ENCODE measurements at regions of chr19 and their contacts with region 1.

Region 1: DNA sequence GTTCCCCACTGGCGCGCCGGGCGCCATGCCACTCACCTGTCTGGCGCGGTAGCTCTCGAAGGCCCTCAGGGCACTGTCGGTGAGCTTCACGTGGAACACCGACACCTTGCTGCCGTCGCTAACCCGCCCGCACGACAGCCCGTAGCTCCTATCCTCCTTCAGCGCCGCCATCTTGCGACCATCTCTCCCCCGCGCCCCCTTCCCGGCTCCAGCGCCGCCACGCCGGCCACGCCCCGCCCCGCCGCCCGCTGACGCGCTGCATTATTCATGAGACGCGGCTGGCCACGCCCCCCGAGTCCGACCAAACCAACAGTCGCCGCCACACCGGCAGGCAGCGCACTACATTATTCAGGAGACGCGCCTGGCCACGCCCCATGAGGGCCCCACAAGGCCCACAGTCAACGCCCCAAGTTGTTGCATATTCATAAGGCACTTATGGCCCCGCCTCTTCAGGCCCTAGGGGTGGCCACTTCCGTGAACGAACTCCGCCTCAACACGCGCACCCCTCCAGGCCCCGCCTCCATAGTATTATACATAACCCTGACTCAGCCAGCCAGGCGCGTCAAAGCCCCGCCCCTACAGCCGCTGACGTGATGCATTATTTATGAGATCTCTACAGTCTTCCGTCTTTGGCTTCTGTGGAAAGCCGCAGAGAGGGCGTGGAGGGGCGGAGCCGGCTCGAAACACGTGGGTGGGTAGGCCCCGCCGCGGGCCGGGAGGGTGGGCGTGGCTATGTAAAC is at the start of gene ELL:
- DNase-seq: peak; percentile 100
- ATAC-seq: peak; percentile 91
- H3K4me3 Mint-ChIP-seq: peak within 1 kb of the TSS; percentile 79
- H3K27ac Mint-ChIP-seq: peak within 1 kb of the TSS; percentile 95
- H3K4me1 Mint-ChIP-seq: peaks cover 11% of the 10 kb centered on the region
- H3K27me3 Mint-ChIP-seq: no peaks in the 10 kb centered on the region
- total RNA-seq, gene ELL: 20.8 to 22.3 TPM

Region 2: DNA sequence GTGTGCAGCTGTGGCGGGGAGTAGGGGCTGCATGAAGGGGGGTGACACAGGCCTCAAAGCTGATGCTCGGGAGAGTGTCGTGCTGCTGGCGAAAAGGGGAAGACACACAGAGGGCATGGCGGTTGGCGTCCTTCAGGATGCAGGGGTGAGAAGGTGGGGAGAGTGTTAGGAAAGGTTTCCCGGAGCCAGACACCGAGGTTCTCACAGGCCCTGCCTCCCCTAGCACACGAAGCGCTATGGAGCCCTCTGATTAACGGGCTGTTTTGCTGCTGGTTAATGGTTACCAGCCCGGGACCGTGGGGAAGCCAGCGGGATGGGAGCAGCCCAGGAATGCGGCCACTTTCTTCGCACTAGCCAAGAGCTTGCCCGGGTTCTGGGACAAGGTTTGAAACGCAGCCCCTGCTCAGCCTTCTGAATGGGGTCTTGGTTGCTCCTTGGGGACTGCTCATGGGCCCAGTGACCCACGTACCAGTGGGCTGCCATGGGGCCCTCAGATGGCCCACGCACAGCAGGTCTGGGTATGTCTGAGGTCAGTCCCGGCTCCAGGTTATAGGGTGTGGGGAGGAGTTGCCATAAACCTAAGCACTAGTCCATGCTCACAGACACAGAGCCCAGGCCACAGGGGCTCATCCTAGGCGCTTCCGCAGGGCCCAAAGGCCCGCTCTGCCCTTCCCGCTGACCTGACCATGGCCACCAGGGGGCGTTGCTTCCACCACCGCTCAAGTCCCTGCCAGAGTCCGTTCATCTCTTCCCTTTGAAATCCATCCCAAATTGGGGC is 52.8 kb before region 1 on chr19:
- CTCF ChIA-PET with region 1: interaction called, 38 read pairs
- POLR2A ChIA-PET with region 1: interaction called, 3 read pairs
- DNase-seq: peak; percentile 69
- ATAC-seq: peak; percentile 49
- H3K4me3 Mint-ChIP-seq: no peak overlapping the region
- H3K27ac Mint-ChIP-seq: no peak overlapping the region
- H3K4me1 Mint-ChIP-seq: peaks cover 32% of the 10 kb centered on the region
- H3K27me3 Mint-ChIP-seq: no peaks in the 10 kb centered on the region

Region 3: GRCh38 chr19:18488838-18489626 is 33.0 kb before region 1 on chr19:
- CTCF ChIA-PET with region 1: interaction called, 46 read pairs
- POLR2A ChIA-PET with region 1: interaction called, 3 read pairs
- DNase-seq: no peak
- ATAC-seq: no peak
- H3K4me3 Mint-ChIP-seq: no peak overlapping the region
- H3K27ac Mint-ChIP-seq: no peak overlapping the region
- H3K4me1 Mint-ChIP-seq: peaks cover 55% of the 10 kb centered on the region
- H3K27me3 Mint-ChIP-seq: no peaks in the 10 kb centered on the region

Region 4: DNA sequence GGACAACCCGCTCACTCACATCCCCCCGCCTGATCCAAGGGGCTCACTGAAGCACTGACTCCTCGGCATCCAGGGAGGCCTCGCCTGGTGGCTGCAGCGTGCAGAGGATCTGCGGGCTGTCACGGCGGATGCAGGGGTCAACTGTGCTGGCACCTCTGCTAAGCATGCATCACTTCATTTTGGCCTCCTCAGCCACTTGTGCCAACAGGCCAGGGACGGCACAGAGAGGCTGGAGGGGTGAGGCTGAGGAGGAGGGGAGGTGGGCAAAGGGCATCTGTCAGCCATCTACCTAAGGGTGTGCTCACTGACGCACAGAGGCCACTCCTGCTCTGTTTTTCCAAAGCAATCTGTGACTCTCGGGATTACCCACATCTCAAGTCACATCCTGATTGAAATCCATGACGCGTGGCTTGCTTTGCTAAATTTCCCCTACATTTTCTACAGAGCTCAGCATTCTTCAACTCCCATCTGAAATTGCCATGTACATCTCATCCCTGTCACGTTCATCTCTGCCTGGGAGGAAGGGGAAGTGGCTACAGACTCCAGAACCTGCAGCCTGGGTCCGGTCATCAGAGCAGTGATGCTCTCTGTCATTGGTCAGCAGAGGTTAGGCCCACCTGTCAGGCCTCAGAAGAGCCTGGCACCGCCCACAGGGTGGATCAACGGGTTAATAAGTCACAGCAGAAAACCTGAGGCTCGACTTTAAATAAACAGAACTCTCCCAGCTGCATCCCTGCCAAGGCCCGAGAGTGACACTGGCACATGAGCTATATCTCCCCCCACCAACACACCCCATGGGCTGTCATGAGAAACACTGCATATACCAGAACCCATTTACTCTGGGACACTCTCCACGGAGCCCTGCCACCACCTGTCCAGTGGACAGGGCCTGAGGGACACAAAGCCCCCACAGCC is 17.8 kb before region 1 on chr19:
- CTCF ChIA-PET with region 1: interaction called, 78 read pairs
- POLR2A ChIA-PET with region 1: interaction called, 7 read pairs
- DNase-seq: no peak
- ATAC-seq: no peak
- H3K4me3 Mint-ChIP-seq: no peak overlapping the region
- H3K27ac Mint-ChIP-seq: peak overlapping the region; percentile 90
- H3K4me1 Mint-ChIP-seq: peaks cover 94% of the 10 kb centered on the region
- H3K27me3 Mint-ChIP-seq: no peaks in the 10 kb centered on the region

Region 5: DNA sequence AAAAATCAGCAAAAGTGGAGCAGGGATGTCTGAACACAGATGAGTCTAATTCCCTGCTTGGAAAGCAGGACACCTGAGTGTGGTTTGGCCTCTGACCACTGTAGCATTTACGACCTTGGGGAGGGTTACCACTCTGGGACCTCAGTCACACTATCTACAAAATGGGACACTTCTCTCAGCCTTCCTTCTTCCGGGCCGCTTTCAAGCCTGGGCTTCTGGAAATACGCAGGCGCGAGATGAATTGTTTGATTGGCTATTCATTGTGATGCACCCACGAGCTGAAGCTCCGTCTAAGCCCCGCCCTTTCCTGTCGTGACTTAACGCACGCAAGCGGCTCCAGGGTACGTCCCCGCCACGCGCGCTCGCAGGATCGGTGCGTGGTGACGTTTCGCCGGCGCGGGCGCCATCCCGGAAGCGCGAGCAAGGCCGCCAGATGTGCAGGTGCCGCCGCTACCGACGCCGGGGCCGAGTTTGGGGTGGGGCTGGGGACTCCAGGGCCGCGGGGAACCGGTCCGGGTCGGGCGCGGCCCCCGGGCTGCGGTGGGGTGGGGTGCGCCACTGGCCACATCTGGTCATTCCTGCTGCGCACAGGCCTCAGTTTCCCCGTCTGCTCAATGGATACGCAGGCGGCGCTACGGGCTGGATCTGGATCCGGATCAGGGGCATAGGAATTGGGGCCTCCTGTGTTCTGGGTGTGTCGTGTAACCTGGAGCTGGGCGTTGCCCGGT is 35.6 kb after region 1 on chr19 and contains the start of gene KXD1:
- CTCF ChIA-PET with region 1: interaction called, 31 read pairs
- POLR2A ChIA-PET with region 1: interaction called, 18 read pairs
- DNase-seq: peak; percentile 100
- ATAC-seq: peak; percentile 98
- H3K4me3 Mint-ChIP-seq: peak within 1 kb of the TSS; percentile 94
- H3K27ac Mint-ChIP-seq: peak within 1 kb of the TSS; percentile 94
- H3K4me1 Mint-ChIP-seq: peaks cover 26% of the 10 kb centered on the region
- H3K27me3 Mint-ChIP-seq: no peaks in the 10 kb centered on the region
- total RNA-seq, gene KXD1: 101 to 108 TPM

Region 6: DNA sequence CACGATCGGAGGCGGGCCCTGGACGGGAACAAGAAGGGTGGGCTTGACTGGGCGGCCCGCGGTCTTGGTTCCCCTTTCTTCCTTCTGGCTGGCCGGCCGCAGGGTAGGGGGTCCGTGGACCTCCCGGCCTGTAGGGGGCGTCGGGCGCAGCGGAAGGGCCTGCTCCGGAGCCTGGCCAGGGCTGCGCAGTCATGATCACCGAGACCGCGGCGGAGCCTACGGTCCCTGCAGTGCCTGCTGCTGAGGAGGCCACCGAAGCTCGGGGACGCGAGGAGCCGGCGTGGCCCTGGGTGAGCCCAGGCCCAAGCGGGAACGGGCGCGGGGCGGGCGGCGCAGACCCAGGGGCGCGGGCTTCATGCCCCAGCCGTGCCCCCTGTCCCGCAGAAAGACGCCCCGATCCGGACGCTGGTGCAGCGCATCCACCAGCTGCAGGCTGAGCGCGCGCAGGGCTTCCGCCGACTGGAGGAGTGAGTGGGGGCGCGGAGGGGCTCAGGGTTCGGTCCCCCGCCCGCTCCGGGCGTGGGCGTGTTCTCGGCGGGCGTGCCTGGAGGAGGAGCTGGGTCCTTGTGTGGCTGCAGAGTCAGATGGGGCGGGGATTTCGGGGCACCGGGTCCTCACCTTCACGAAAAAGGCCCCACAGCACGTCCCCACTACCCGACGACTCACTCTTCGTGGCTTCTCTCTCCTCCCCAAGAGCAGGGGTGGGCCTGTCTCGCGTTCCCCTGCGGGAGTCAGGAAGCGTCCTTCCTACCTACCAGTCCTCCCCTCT is 66.7 kb after region 1 on chr19 and contains the start of gene REX1BD:
- CTCF ChIA-PET with region 1: interaction called, 51 read pairs
- POLR2A ChIA-PET with region 1: interaction called, 25 read pairs
- DNase-seq: peak; percentile 93
- ATAC-seq: peak; percentile 79
- H3K4me3 Mint-ChIP-seq: peak within 1 kb of the TSS; percentile 83
- H3K27ac Mint-ChIP-seq: peak within 1 kb of the TSS; percentile 96
- H3K4me1 Mint-ChIP-seq: peaks cover 47% of the 10 kb centered on the region
- H3K27me3 Mint-ChIP-seq: no peaks in the 10 kb centered on the region
- total RNA-seq, gene REX1BD: 91.5 to 98.7 TPM

Region 7: GRCh38 chr19:18644196-18645034 is 122.4 kb after region 1 on chr19:
- CTCF ChIA-PET with region 1: no interaction called
- POLR2A ChIA-PET with region 1: no interaction called
- DNase-seq: no peak
- ATAC-seq: no peak
- H3K4me3 Mint-ChIP-seq: no peak overlapping the region
- H3K27ac Mint-ChIP-seq: no peak overlapping the region
- H3K4me1 Mint-ChIP-seq: peaks cover 15% of the 10 kb centered on the region
- H3K27me3 Mint-ChIP-seq: no peaks in the 10 kb centered on the region

Region 8: DNA sequence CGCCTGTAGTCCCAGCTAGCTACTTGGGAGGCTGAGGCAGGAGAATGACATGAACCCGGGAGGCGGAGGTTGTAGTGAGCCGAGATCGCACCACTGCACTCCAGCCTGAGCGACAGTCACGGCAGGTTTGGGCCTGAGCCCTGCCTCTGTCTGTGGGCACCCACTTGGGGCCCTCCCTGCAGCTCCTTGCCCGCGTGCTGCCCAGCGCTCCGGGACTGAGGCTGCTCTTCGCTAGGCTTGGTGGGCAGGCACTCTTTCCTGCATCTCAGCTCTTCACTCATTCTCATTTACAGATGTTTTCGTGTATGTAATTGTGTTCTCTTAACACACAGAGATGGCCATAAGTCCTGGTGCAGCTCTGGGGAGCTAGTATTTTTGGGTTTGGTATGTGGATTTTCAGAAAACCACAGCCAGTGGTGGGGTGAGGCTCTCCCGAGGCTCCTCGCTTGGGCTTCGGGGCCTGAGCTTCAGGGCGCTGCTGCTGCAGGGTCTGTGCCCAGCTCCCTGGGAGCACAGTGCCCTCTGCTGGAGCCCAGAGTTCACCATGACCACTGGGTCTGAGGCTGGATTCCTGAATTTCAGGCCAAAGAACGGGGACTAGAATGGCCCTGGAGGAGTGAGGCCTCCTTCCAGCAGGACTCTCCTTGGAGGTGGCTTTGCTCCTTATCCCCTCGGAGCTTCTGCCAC is 324.9 kb after region 1 on chr19:
- CTCF ChIA-PET with region 1: interaction called, 20 read pairs
- POLR2A ChIA-PET with region 1: interaction called, 3 read pairs
- DNase-seq: peak; percentile 74
- ATAC-seq: peak; percentile 78
- H3K4me3 Mint-ChIP-seq: no peak overlapping the region
- H3K27ac Mint-ChIP-seq: peak overlapping the region; percentile 60
- H3K4me1 Mint-ChIP-seq: peaks cover 69% of the 10 kb centered on the region
- H3K27me3 Mint-ChIP-seq: no peaks in the 10 kb centered on the region

Measured in activated CD8-positive, alpha-beta T cell treated with anti-CD3 and anti-CD28 coated beads, Interleukin-2, amount 10 ng/mL, durations not matched to agents 7 days and 5 days (primary cell).